Breast epithelium (tissue), 4 donors: ENCODE measurements at regions of chr4 and their contacts with region 1.

Region 1: GRCh38 chr4:54773016-54773415 is 115.3 kb downstream of the KIT start:
- DNase-seq: no peak
- H3K4me3 ChIP-seq: no peak overlapping the region
- H3K27ac ChIP-seq: no peak overlapping the region
- H3K4me1 ChIP-seq: no peaks in the 10 kb centered on the region
- H3K27me3 ChIP-seq: no peaks in the 10 kb centered on the region
- CTCF ChIP-seq: no peak
- POLR2A ChIP-seq: no peak

Region 2: DNA sequence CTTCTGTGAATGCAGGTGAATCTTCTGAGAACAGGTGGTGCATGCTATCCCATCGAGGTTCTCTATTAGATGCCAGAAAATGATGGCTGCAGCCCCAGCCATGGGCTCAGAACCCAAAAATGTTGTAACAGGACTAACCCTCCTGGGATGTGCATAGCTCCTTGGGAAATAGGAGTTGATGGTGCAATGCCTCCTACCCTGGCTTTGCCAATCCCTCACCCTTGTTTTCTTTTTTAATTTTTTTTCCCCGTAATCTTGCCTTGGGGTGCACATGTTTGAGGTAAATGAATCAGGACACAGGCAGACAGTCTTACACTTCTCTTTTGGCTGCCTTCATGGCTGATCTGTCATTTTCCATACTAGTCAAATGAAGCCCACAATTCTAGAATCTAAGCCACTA is 18.6 kb before region 1 on chr4:
- intact Hi-C with region 1: loop called (anchors 1 kb)
- DNase-seq: no peak
- H3K4me3 ChIP-seq: no peak overlapping the region
- H3K27ac ChIP-seq: no peak overlapping the region
- H3K4me1 ChIP-seq: no peaks in the 10 kb centered on the region
- H3K27me3 ChIP-seq: no peaks in the 10 kb centered on the region
- CTCF ChIP-seq: no peak
- POLR2A ChIP-seq: no peak